Heart left ventricle (tissue), 16 donors: ENCODE measurements at regions of chr22 and their contacts with region 1.

Region 1: GRCh38 chr22:23894710-23895598 is 771 bp downstream of the MIF start:
- DNase-seq: peak; percentile 44 to 81 (median 65)
- ATAC-seq: peak; percentile 16 to 54 (median 46)
- H3K4me3 ChIP-seq: peak overlapping the region; percentile 28 to 87 (median 68)
- H3K27ac ChIP-seq: peak overlapping the region; percentile 79 to 98 (median 90)
- H3K4me1 ChIP-seq: peaks cover 0 to 38% (median 23%) of the 10 kb centered on the region in 12 donors
- H3K27me3 ChIP-seq: no peaks in the 10 kb centered on the region
- CTCF ChIP-seq: peak in 3 of 12 donors; percentile 9 to 16 (median 10)
- POLR2A ChIP-seq: no peak

Region 2: DNA sequence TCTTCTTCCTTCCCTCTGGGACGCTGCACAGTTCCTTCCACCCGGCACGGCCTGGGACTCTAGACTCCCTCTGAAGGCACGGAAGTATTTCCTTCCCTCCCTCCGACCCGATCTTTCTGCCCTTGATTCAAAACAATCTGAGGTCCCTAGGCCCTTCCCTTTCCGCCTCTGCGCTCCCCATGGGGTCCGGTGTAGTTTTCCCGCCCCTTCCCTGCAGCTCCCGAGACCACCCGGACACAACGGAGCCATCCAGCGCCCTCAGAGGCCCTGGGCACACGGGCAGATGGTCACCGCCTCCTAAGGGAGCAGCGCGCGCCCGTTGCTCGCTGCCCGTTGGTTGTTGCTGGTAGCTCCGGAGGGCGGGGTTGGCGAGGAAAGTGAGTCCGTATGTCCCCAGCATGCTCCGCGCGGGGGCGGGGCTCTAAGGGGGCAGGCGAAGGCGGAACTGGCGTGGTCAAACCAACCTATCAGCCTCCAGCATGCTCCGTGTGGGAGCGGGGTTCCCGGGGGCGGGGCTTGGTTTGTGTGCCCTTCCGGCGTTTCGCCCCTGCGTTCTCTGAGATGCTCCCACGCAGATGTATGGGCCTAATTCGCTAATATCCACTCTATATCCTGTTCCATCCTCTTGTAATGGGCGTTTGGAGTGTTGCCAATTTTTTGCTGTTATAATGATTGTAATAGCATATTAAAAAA is 18.9 kb after region 1 on chr22:
- intact Hi-C with region 1: loop called in 1 of 10 experiments (anchors 1 kb)
- DNase-seq: peak; percentile 99 to 100 (median 100)
- ATAC-seq: peak; percentile 98 to 100 (median 100)
- H3K4me3 ChIP-seq: peak overlapping the region; percentile 24 to 73 (median 64)
- H3K27ac ChIP-seq: peak overlapping the region; percentile 42 to 94 (median 87)
- H3K4me1 ChIP-seq: peaks cover 0 to 21% (median 18%) of the 10 kb centered on the region in 12 donors
- H3K27me3 ChIP-seq: no peaks in the 10 kb centered on the region
- CTCF ChIP-seq: no peak
- POLR2A ChIP-seq: peak in 1 of 2 donors; percentile 91